PC-3 (cell line): ENCODE measurements at regions of chr2 and their contacts with region 1.

Region 1: GRCh38 chr2:171390941-171391516 is 42.8 kb downstream of the METTL8 start:
- DNase-seq: peak; percentile 95
- ATAC-seq: peak; percentile 90
- H3K4me3 ChIP-seq: peak overlapping the region; percentile 48
- H3K27ac ChIP-seq: peak overlapping the region; percentile 96
- H3K4me1 ChIP-seq: peaks cover 35% of the 10 kb centered on the region
- H3K27me3 ChIP-seq: no peaks in the 10 kb centered on the region
- CTCF ChIP-seq: no peak

Region 2: GRCh38 chr2:171347591-171348032 is 43.4 kb before region 1 on chr2:
- CTCF ChIA-PET with region 1: no interaction called
- POLR2A ChIA-PET with region 1: no interaction called
- intact Hi-C with region 1: loop called (anchors 5 kb)
- DNase-seq: peak; percentile 82
- ATAC-seq: peak; percentile 91
- H3K4me3 ChIP-seq: no peak overlapping the region
- H3K27ac ChIP-seq: peak overlapping the region; percentile 65
- H3K4me1 ChIP-seq: peaks cover 25% of the 10 kb centered on the region
- H3K27me3 ChIP-seq: no peaks in the 10 kb centered on the region
- CTCF ChIP-seq: no peak